GM10248 (cell line): ENCODE measurements at regions of chr16 and their contacts with region 1.

Region 1: GRCh38 chr16:87778830-87779579 is 13.2 kb upstream of the KLHDC4 start:
- DNase-seq: peak; percentile 84
- CTCF ChIP-seq: peak; percentile 98

Region 2: DNA sequence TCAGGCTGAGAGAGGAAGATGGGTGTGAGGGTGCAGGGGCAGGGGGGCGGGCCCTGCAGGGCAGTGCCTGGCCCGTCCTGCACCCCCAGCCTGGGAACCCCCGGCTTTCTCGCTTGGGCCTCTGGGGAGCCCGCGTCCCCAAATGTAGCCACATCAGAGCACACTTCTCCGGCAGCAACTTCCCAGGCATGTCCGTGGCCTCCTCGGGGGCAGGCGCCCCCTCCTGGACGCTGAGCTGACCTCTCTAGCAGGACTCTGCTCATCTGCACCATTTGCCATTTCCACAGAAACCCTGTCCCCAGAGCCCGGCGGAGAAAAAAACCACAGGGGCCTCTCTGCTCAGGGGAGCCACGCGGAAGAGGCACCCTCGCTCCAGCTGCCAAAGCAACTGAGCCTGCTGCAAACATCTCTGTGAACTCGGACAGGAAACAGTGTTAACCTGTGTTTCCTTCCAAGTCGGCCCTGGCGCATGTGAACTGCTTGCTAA is 76.6 kb before region 1 on chr16:
- CTCF ChIA-PET with region 1: no interaction called
- POLR2A ChIA-PET with region 1: no interaction called
- DNase-seq: peak; percentile 85
- CTCF ChIP-seq: peak; percentile 81

Region 3: DNA sequence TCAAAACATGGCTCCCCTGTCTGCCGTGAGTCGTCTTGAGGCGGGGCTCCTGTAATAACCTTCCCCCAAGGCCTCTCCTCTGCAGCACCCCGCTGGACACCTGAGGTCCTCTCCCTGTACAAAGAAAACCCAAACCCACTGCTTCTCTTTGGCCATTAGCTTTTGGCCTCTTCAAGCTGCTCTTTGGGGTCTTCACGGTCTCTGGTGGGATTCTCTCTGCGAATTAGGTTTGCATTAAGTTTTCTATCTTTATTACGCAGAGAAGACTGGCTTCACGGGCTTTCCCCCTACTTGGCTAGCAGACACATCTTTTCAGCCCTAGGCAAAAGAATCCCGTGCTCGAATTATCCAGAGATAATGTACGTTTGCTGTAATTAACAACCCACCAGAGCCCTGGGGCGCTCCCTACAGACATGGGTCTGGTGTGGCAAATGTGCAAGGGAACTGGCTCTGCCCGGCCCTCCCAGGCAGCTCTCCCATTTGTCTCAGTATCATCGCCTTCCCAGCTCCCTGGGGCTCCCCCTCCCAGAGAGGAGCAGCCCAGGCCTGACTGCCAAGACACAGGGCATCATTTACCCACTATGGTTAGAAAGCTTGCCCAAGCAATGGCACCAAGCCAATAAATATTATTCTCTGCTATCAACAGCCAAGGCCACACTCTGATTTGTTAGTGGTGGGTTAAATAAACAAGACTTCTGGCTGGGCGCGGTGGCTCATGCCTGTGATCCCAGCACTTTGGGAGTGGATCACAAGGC is 11.4 kb after region 1 on chr16:
- CTCF ChIA-PET with region 1: interaction called, 29 read pairs
- POLR2A ChIA-PET with region 1: no interaction called
- DNase-seq: no peak
- CTCF ChIP-seq: no peak

Region 4: GRCh38 chr16:87828071-87828971 is 49.3 kb after region 1 on chr16:
- CTCF ChIA-PET with region 1: interaction called, 20 read pairs
- POLR2A ChIA-PET with region 1: no interaction called
- DNase-seq: no peak
- CTCF ChIP-seq: no peak

Region 5: GRCh38 chr16:87853411-87854052 is 74.5 kb after region 1 on chr16:
- CTCF ChIA-PET with region 1: interaction called, 108 read pairs
- POLR2A ChIA-PET with region 1: no interaction called
- DNase-seq: peak; percentile 88
- CTCF ChIP-seq: no peak

Region 6: GRCh38 chr16:87895641-87896141 is 116.7 kb after region 1 on chr16:
- CTCF ChIA-PET with region 1: interaction called, 12 read pairs
- POLR2A ChIA-PET with region 1: no interaction called
- DNase-seq: peak; percentile 70
- CTCF ChIP-seq: no peak

Region 7: GRCh38 chr16:87930456-87930855 is 151.5 kb after region 1 on chr16:
- CTCF ChIA-PET with region 1: interaction called, 13 read pairs
- POLR2A ChIA-PET with region 1: no interaction called
- DNase-seq: no peak
- CTCF ChIP-seq: peak; percentile 20

Region 8: DNA sequence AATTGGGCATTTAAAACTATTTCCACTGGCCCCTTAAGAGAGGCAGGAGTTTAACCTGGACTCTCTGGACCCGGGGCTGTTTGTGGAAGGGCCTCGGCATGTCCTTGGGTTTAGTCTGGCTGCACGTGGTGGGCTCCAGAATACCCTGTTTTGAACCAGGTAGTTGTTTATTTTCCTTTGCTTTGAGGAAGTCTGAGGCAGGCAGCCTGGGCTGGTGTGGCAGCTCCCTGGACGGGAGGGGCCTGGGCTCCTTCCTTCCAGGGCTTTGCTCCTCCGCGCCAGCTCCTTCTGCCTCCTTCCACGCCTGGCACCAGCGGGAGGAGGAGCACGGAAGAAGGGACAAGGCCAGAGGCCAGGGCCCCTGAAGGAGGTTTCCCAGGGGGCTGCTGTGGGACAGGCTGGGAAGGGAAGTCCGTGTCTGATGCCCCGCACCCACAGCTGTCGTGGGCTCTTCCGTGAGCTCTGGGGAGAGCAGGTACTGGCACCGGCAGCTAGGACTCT is 187.7 kb after region 1 on chr16:
- CTCF ChIA-PET with region 1: no interaction called
- POLR2A ChIA-PET with region 1: no interaction called
- DNase-seq: no peak
- CTCF ChIP-seq: no peak

Region 9: DNA sequence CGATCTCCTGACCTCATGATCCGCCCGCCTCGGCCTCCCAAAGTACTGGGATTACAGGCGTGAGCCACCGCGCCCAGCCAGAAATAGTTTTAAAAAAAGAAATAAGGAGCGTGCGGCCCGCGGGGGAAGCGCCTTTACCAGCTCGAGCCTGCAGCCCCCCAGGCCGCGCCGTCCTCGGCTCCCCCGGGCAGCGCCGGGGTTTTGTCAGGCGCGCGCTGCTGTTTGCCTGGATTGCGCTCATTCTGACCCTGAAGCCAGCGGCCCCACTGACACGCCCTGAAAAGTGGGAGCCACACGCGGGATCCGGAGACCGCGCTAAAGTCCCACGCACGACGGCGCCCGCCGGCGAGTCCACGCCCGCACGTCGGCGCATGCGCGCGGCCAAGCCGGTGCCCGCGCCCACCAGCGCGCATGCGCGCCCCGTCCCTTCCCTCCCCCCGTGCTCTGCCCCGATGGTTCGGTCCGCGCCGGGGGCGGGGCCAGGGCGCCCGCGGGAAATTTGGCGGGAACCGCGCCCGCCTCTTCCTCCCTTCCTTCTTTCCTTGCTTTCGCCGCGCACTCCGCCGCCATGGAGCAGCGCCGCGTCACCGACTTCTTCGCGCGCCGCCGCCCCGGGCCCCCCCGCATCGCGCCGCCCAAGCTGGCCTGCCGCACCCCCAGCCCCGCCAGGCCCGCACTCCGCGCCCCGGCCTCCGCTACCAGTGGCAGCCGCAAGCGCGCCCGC is 1024.4 kb after region 1 on chr16 and contains the start of gene CDT1:
- CTCF ChIA-PET with region 1: no interaction called
- POLR2A ChIA-PET with region 1: no interaction called
- DNase-seq: peak; percentile 99
- CTCF ChIP-seq: no peak